PC-3 (cell line): ENCODE measurements at regions of chr11 and their contacts with region 1.

Region 1: GRCh38 chr11:24509114-24509513 is 12.3 kb downstream of the LUZP2 start:
- DNase-seq: peak; percentile 44
- ATAC-seq: peak; percentile 32; the same call in 1 of the 2 replicates
- H3K4me3 ChIP-seq: no peak overlapping the region
- H3K27ac ChIP-seq: no peak overlapping the region
- H3K4me1 ChIP-seq: peaks cover 30% of the 10 kb centered on the region
- H3K27me3 ChIP-seq: no peaks in the 10 kb centered on the region
- CTCF ChIP-seq: peak; percentile 55; the same call in 1 of the 2 replicates

Region 2: GRCh38 chr11:24543786-24544185 is 34.7 kb after region 1 on chr11:
- CTCF ChIA-PET with region 1: no interaction called
- POLR2A ChIA-PET with region 1: no interaction called
- intact Hi-C with region 1: no loop called
- DNase-seq: no peak
- ATAC-seq: no peak
- H3K4me3 ChIP-seq: no peak overlapping the region
- H3K27ac ChIP-seq: no peak overlapping the region
- H3K4me1 ChIP-seq: no peaks in the 10 kb centered on the region
- H3K27me3 ChIP-seq: no peaks in the 10 kb centered on the region
- CTCF ChIP-seq: no peak

Region 3: GRCh38 chr11:24558586-24558985 is 49.5 kb after region 1 on chr11:
- CTCF ChIA-PET with region 1: no interaction called
- POLR2A ChIA-PET with region 1: no interaction called
- intact Hi-C with region 1: no loop called
- DNase-seq: no peak
- ATAC-seq: no peak
- H3K4me3 ChIP-seq: no peak overlapping the region
- H3K27ac ChIP-seq: no peak overlapping the region
- H3K4me1 ChIP-seq: no peaks in the 10 kb centered on the region
- H3K27me3 ChIP-seq: no peaks in the 10 kb centered on the region
- CTCF ChIP-seq: peak; percentile 32; the same call in 1 of the 2 replicates

Region 4: DNA sequence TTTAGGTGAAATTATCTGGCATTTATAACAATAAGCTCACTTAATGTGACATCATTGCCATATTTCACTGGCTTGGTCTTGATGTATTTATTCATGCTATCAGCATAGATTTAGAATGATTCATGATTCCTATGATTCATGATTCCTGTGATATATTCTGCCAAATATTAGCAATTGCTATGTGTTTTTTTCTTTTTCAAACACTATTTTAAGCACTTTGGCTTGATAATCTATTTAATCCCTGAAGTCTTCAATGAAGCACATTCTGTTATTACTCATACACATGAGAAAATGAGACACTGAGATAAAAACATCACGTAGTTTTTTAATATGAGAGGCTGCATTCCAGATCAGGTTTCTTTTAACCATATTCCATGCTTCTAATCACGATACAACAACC is 66.3 kb after region 1 on chr11:
- CTCF ChIA-PET with region 1: no interaction called
- POLR2A ChIA-PET with region 1: no interaction called
- intact Hi-C with region 1: loop called (anchors 1 kb)
- DNase-seq: peak; percentile 78
- ATAC-seq: peak; percentile 84
- H3K4me3 ChIP-seq: no peak overlapping the region
- H3K27ac ChIP-seq: peak overlapping the region; percentile 70
- H3K4me1 ChIP-seq: peaks cover 22% of the 10 kb centered on the region
- H3K27me3 ChIP-seq: no peaks in the 10 kb centered on the region
- CTCF ChIP-seq: no peak

Region 5: DNA sequence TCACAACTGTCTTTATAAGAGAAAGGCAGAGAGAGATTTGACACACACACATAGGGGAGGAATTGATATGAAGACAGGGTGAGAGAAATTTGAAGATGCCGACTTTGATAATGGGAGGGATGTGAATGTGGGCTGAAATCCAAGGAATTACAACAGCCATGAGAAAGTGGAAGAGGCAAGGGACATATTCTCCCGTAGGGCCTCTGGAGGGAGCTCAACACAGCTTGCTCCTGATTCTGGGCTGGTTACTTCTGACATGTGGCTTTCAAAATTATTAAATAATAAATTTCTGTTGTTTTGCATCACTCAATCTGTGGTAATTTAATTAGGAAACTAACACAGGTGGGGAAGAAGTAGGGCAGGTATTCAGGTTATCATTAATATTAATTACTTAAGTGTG is 270.7 kb after region 1 on chr11:
- CTCF ChIA-PET with region 1: no interaction called
- POLR2A ChIA-PET with region 1: no interaction called
- intact Hi-C with region 1: loop called (anchors 5 kb)
- DNase-seq: peak; percentile 54
- ATAC-seq: peak; percentile 58; the same call in 1 of the 2 replicates
- H3K4me3 ChIP-seq: no peak overlapping the region
- H3K27ac ChIP-seq: no peak overlapping the region
- H3K4me1 ChIP-seq: no peaks in the 10 kb centered on the region
- H3K27me3 ChIP-seq: no peaks in the 10 kb centered on the region
- CTCF ChIP-seq: peak; percentile 58

Region 6: GRCh38 chr11:24833573-24833972 is 324.5 kb after region 1 on chr11:
- CTCF ChIA-PET with region 1: no interaction called
- POLR2A ChIA-PET with region 1: no interaction called
- intact Hi-C with region 1: loop called (anchors 10 kb)
- DNase-seq: no peak
- ATAC-seq: no peak
- H3K4me3 ChIP-seq: no peak overlapping the region
- H3K27ac ChIP-seq: no peak overlapping the region
- H3K4me1 ChIP-seq: peaks cover 20% of the 10 kb centered on the region
- H3K27me3 ChIP-seq: no peaks in the 10 kb centered on the region
- CTCF ChIP-seq: no peak